PC-3 (cell line): ENCODE measurements at regions of chr6 and their contacts with region 1.

Region 1: DNA sequence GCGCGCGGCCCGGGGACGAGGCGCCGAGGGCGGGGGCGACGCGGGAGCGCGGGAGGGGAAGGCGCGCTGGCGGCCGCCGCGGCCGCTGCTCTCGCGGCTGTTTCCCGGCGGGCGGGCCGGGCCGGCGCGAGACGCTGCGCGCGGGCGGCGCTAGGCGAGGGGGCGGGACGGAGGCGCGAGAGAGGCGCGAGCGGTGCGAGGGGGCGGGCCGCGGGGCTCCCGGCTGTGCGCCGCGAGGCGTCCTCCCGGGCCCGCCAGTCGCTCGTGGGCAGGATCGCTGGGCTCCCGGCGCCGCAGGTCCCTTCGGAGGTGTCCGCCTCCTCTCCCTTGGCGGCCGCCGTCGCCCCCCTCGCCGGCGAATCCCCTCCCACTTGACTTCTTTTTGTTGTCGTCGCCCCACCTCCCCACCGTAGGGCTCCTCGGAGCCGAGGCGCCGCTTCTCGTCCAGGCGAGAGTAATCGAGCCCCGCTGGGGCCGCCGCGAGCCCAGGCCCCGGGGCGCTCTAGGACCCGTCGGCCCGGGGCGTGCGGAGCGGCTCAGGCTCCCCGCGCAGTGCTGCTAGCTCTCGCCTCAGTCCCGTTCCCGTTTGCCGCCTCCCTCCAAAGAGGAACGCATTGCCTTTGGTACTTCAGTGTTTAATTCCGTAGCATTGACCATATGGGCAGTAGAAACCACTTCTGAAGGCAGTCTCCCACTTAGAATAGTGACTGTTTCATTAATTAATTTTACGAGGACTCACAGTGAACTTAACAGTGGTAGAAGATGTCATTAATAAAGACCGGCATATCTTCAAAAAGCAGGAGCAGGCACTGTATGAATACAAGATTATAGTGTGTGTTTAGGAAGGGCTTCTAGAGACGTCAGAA is at the start of gene RANBP9:
- DNase-seq: peak; percentile 88
- ATAC-seq: peak; percentile 78
- H3K4me3 ChIP-seq: peak within 1 kb of the TSS; percentile 87
- H3K27ac ChIP-seq: peak within 1 kb of the TSS; percentile 80
- H3K4me1 ChIP-seq: peaks cover 32% of the 10 kb centered on the region
- H3K27me3 ChIP-seq: no peaks in the 10 kb centered on the region
- CTCF ChIP-seq: no peak
- total RNA-seq, gene RANBP9: 25.8 and 27.9 TPM in 2 replicates

Region 2: GRCh38 chr6:13574149-13574570 is 137.8 kb before region 1 on chr6:
- CTCF ChIA-PET with region 1: no interaction called
- POLR2A ChIA-PET with region 1: no interaction called
- intact Hi-C with region 1: loop called (anchors 5 kb)
- DNase-seq: peak; percentile 95
- ATAC-seq: peak; percentile 81
- H3K4me3 ChIP-seq: peak overlapping the region; percentile 79
- H3K27ac ChIP-seq: peak overlapping the region; percentile 91
- H3K4me1 ChIP-seq: peaks cover 11% of the 10 kb centered on the region
- H3K27me3 ChIP-seq: no peaks in the 10 kb centered on the region
- CTCF ChIP-seq: peak; percentile 39

Region 3: DNA sequence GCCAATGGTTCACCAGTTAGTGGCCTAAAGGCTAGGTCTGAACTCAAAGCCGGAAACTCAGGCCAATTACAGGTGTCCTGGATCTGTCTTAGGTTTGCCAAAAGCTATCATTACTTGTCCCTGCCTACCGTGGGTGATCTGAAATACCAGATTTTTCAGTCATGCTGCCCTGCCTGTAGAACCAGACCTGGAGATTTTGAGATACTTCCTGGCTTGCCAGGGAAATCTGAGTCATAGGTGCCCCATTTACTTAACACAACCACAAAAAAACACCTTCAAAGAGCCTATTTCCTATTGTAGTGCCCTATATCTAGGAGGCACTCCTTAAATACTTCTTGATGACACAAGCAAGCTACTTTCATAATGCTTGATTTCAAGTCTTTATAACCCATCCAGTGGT is 13.6 kb after region 1 on chr6:
- CTCF ChIA-PET with region 1: interaction called, 6 read pairs
- POLR2A ChIA-PET with region 1: interaction called, 5 read pairs
- intact Hi-C with region 1: loop called (anchors 1 kb)
- DNase-seq: peak; percentile 99
- ATAC-seq: peak; percentile 57
- H3K4me3 ChIP-seq: peak overlapping the region; percentile 16; the same call in 1 of the 2 replicates
- H3K27ac ChIP-seq: peak overlapping the region; percentile 90
- H3K4me1 ChIP-seq: peaks cover 71% of the 10 kb centered on the region
- H3K27me3 ChIP-seq: no peaks in the 10 kb centered on the region
- CTCF ChIP-seq: no peak

Region 4: DNA sequence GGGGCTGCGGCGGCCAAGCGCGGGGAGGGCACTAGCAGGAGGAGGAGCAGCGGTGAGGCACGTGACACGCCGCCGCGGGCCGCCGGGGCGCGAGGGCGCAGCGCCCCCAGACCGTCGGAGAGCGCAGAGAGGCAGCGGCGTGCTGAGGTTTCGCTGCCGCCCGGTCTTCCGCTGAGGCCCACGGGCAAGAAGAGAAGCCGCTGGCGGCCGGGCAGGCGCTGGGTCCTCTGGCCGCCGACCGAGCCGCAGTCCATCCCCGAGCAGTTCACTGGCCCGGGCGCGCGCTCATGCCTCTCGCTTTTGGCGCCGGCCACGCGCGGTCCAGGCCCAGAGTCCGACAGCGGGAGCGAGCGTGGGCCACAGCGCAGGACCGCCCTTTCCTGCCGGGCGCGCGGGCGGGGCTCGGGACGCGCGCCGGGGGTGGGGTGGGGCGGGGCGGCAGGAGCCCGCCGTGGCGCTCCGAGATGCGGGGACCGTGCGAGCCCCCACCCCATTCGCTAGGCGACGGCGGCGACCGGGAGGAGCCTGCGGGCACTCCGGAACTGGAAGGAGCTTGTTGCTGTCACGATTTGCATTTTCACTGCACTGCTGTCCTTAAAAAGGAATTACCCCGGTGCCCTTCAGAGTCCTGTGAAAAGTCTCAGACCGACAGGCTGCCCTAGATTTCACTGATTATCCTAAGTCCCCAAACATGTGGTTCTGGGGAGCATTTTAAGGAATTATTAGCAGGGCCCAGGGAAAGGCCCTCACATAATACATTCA is 102.4 kb after region 1 on chr6 and contains the start of gene MCUR1:
- CTCF ChIA-PET with region 1: no interaction called
- POLR2A ChIA-PET with region 1: no interaction called
- intact Hi-C with region 1: loop called (anchors 5 kb)
- DNase-seq: peak; percentile 89
- ATAC-seq: peak; percentile 76
- H3K4me3 ChIP-seq: peak within 1 kb of the TSS; percentile 86
- H3K27ac ChIP-seq: peak within 1 kb of the TSS; percentile 44
- H3K4me1 ChIP-seq: peaks cover 18% of the 10 kb centered on the region
- H3K27me3 ChIP-seq: no peaks in the 10 kb centered on the region
- CTCF ChIP-seq: peak; percentile 22; the same call in 1 of the 2 replicates
- total RNA-seq, gene MCUR1: 28.6 and 36.2 TPM in 2 replicates